Activated CD4-positive, alpha-beta T cell treated with anti-CD3 and anti-CD28 coated beads for 36 hours (primary cell): ENCODE measurements at regions of chr10 and their contacts with region 1.

Region 1: DNA sequence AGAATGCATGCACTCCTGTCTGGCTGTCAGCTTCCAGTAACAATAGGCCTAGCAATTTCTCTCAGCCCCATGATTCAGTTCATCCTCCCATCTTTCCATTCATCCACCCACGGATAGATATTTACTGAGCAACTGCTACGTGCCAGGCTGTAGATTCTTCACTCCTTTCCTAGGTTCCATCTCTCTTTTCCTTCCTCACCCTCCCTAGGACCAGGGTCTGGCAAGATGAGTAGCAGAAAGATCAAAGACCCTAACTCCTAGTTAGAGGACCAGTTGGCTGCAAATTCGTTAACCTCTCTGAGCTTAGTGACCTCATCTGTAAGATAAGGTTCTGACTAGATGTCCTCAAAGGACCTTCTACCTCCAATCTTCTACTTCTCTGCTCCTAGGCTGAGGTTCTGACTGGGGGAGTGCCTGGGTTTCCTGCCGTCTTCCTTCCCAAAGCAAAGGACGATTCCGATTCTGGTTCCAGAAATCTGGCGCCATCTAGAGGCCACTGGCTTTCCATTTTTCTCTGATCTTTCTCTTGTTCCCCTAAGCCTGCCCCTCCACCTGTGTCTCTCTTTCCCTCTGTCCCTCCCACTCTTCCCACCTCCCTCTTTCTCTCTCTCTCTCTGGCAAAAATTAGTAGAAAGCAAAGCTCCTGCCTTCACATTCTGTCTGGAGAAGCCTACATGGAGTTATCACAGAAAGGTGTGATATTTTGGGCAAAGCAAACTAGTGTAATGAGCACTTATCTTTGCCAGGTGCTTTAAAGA is 26.2 kb downstream of the TBATA start:
- DNase-seq: peak; percentile 81
- ATAC-seq: peak; percentile 71
- H3K4me3 Mint-ChIP-seq: no peak overlapping the region
- H3K27ac Mint-ChIP-seq: peak overlapping the region; percentile 38
- H3K4me1 Mint-ChIP-seq: peaks cover 6% of the 10 kb centered on the region
- H3K27me3 Mint-ChIP-seq: no peaks in the 10 kb centered on the region

Region 2: DNA sequence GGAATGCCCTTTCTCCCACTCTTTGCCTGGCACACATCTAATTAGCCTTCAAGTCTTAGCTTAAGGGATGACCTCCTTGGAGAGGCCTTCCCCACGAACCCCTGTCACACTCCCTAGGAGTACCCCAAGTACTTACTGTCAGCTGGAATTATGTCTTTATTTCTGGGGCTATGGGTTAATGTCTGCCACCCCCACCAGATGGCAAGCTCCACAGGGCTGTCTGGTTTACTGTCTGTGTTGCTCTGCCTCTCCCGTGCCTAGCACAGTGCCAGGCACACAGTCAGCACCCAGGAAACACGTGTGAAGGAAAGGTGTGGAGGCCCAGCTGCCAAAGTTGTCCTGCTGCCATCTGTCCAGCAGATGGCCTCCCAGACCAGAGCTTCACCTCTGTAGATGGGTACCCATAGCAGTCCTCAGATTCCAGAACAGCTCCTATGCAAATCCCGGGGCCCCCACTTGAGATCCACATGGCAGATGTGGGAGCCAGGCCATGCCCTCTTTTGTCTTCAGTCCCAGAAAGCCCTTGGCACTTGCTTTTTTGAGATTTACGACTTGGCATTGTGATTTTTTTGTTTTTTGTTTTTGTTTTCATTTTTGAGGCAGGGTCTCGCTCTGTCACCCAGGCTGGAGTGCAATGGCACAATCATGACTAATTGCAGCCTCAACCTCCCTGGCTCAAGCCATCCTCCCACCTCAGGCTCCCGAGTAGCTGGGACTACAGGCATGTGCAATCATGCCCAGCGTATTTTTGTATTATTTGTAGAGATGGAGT is 297.5 kb before region 1 on chr10:
- CTCF ChIA-PET with region 1: no interaction called
- POLR2A ChIA-PET with region 1: no interaction called
- intact Hi-C with region 1: loop called (anchors 1 kb)
- DNase-seq: peak; percentile 73
- ATAC-seq: peak; percentile 80
- H3K4me3 Mint-ChIP-seq: no peak overlapping the region
- H3K27ac Mint-ChIP-seq: no peak overlapping the region
- H3K4me1 Mint-ChIP-seq: peaks cover 9% of the 10 kb centered on the region
- H3K27me3 Mint-ChIP-seq: peaks cover 28% of the 10 kb centered on the region

Region 3: GRCh38 chr10:70549962-70550458 is 208.9 kb before region 1 on chr10:
- CTCF ChIA-PET with region 1: interaction called, 65 read pairs
- POLR2A ChIA-PET with region 1: no interaction called
- intact Hi-C with region 1: loop called (anchors 1 kb)
- DNase-seq: peak; percentile 83
- ATAC-seq: peak; percentile 91
- H3K4me3 Mint-ChIP-seq: no peak overlapping the region
- H3K27ac Mint-ChIP-seq: no peak overlapping the region
- H3K4me1 Mint-ChIP-seq: no peaks in the 10 kb centered on the region
- H3K27me3 Mint-ChIP-seq: no peaks in the 10 kb centered on the region

Region 4: DNA sequence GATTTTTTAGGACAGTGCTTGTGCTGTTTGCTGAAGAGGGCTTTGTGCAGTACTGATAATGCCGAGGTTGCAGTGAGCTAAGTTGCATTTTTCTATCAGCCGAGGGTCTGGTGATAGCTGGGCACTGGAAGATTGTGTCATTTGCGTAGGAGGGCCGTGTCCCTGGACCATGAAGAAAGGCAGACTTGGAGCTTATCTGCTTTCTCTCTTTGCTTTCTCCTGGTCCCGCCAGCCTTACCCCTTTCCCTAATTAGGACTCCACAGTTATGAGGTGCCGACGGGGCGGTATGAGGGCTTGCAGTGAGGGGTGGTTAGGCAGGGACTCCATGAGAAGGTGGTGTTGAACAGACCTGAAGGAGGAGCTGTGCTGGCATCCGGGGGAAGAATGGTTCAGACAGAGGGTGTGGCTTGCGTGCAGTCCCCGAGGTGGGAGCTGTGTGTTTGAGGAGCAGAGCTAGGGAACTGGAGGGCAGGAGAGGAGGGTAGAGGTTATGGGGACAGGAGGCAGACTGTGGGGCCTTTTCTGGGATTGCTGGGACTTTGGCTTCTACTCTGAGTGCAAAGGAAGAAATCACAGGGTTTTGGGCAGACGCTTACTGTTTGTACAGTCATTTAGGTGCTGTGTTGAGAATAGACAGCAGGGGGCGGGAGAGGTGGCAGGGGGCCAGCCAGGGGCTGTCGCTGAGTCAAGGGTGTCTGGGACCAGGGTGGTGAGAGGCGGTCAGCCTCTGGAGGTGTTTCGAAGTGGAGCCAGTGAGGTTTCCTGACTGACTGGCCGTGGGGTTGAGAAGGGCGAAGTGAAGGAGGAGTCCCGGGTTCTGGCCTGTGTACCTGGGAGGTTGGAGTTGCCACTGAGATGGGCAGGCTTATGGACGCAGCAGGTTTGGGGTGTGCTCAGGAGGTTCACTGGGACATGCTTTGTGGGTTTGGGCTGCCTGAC is 199.8 kb before region 1 on chr10:
- CTCF ChIA-PET with region 1: interaction called, 15 read pairs
- POLR2A ChIA-PET with region 1: no interaction called
- intact Hi-C with region 1: loop called (anchors 1 to 2 kb)
- DNase-seq: peak; percentile 87
- ATAC-seq: peak; percentile 95
- H3K4me3 Mint-ChIP-seq: peak overlapping the region; percentile 60
- H3K27ac Mint-ChIP-seq: peak overlapping the region; percentile 23
- H3K4me1 Mint-ChIP-seq: peaks cover 12% of the 10 kb centered on the region
- H3K27me3 Mint-ChIP-seq: no peaks in the 10 kb centered on the region

Region 5: DNA sequence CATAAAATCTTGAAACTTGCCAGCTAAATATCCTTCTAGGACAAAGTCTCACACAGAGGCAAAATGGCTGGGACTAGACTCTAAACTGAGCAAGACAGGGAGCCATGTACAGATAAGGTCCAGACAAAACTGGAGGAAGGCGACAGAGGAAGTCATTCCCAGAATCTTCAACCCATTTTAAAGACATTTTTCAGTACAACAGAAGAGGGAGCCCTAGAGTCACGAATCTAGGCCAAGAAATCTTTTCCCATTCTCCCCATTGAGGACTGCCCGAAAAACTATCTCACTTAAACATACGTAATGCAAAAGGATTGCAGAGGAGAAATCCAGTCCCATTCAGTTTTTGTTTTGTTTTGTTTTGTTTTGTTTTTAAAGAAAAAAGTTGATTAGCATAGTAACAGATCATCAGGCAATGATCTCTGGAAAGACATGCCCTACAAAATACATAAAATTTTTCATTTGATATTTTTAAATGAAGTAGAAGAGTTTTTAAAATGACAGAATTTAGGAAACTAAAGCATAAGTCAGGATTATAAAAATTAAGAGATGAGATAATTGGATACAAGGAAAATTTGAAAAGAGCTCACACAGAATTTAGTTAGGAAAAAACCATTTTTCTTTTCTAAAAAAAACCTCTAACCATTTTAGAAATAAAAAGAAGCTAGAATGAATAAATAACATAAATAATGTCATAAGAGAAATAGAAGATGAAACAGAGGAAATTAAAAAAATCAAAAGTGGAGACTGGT is 139.5 kb before region 1 on chr10:
- CTCF ChIA-PET with region 1: interaction called, 5 read pairs
- POLR2A ChIA-PET with region 1: no interaction called
- intact Hi-C with region 1: loop called (anchors 1 kb)
- DNase-seq: no peak
- ATAC-seq: no peak
- H3K4me3 Mint-ChIP-seq: no peak overlapping the region
- H3K27ac Mint-ChIP-seq: no peak overlapping the region
- H3K4me1 Mint-ChIP-seq: peaks cover 16% of the 10 kb centered on the region
- H3K27me3 Mint-ChIP-seq: peaks cover 10% of the 10 kb centered on the region

Region 6: DNA sequence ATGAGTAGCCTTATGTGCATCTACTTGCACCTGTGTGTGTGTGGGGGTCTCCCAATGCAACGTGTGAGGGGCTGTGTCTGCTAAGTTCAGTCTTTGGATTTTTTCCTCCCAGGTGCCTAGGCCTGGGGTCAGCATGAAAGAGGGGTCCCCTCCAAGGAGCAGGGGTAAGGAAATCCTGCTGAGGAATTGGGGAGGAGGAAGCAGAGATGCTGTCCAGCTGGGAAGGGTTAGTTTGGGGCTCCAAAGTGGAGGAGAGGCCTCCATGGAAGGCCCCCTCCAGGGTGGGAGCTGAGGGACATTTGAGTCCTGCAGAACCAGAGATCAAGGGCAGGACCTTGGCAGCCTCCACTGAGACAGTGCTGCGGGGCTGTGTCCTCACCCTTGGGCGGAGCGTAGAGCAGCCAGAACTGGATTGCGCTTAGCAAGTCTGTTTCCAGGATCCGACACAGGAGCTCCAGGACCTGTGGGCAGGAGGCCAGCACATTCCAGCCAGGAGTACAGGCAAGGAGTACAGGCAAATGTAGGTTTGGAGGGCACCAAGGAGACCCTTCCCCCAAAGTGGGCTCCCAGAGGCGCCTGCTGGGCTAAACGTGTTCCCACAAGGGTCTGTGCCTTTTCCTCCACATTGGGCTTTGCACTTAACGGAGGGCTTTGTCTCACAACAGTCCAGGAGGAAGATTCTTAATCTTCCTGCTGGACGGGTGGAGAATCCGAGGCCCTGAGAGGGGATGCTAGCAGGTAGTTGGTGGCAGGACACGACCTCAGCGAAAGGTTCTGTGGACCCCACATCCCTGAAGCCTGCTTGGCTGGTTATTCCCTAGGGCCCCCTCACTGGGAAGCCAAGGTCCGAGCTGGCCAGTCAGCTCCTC is 16.1 kb after region 1 on chr10:
- CTCF ChIA-PET with region 1: no interaction called
- POLR2A ChIA-PET with region 1: no interaction called
- intact Hi-C with region 1: no loop called
- DNase-seq: no peak
- ATAC-seq: no peak
- H3K4me3 Mint-ChIP-seq: no peak overlapping the region
- H3K27ac Mint-ChIP-seq: no peak overlapping the region
- H3K4me1 Mint-ChIP-seq: no peaks in the 10 kb centered on the region
- H3K27me3 Mint-ChIP-seq: no peaks in the 10 kb centered on the region

Region 7: DNA sequence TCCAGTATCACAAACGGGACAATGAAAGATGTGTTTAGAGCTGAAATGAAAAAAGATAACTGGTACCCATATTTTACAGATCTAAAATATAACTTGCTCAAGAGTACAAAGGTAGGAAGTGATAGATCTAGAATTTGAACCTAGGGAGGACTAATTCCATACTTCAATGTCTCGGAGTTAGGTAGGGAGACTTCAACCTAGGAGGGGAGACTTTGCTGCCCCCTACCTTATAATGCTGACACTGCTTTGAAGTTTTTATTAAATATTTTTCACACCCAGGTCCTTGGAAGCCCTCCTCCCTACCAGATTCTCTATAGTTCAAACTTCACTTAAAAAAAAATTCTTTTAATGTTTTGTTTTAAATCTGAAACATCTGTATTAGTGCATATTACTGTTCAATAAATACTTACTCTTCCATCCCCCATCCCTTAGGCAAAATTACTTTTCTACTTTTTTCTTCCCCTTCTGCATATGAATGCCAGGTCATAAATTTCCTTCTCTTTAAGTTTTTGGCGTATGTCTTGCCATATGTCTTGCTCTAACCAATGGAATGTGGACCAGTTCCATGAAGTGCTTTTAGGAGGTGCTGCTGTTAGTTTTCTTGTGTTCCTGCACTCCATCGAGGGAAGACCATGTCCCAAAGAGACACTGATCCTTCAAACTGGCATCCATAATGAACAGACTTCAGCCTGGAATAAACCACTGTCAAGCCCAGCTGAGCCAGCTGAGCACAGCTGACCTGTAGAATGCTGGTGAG is 1809.1 kb after region 1 on chr10:
- CTCF ChIA-PET with region 1: no interaction called
- POLR2A ChIA-PET with region 1: no interaction called
- intact Hi-C with region 1: no loop called
- DNase-seq: no peak
- ATAC-seq: no peak
- H3K4me3 Mint-ChIP-seq: no peak overlapping the region
- H3K27ac Mint-ChIP-seq: no peak overlapping the region
- H3K4me1 Mint-ChIP-seq: peaks cover 17% of the 10 kb centered on the region
- H3K27me3 Mint-ChIP-seq: no peaks in the 10 kb centered on the region